Ovary (tissue), 10 donors: ENCODE measurements at regions of chr7 and their contacts with region 1.

Region 1: DNA sequence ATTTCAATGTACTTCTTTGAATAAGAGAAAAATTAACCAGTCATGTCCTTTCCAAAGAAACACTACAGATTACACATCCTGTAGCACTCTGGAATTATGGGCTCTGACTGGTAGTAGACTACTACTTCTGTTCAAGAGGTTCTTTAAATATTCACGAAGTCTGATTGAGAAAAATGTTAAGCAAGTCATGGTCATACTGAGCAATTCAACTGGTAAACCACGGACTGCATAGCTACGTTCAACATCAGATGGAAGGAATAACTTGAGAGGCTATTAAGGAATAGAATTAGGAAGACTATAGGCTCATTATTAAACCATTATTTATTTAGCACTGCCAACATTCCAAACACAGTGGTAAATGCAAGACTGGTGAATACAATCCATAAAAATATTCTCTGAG is 160.8 kb downstream of the IMMP2L start:
- DNase-seq: no peak
- H3K4me3 ChIP-seq: no peak overlapping the region
- H3K27ac ChIP-seq: no peak overlapping the region
- H3K4me1 ChIP-seq: peaks cover 3% of the 10 kb centered on the region
- H3K27me3 ChIP-seq: no peaks in the 10 kb centered on the region
- CTCF ChIP-seq: no peak
- EP300 ChIP-seq: no peak
- POLR2A ChIP-seq: no peak

Region 2: DNA sequence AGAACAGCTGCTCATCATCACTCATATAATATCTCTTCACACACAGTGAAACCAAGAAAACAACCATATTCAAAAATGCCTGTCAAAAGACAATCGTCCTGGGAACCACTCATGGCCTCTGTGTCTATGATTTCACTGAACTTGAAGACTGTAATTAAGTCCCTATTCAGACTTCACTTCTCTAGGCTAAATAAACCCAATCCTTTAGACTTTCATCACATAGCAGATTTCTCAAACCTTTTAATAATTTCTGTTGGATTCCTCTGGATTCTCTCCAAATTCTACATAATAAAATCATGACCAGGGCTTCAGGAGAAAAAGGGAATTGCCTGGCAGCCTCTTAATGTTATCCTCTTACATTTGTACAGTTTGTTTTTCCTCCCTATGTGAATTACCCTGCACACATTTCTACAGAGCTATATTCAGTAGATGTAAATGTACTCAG is 109.5 kb before region 1 on chr7:
- intact Hi-C with region 1: no loop called
- DNase-seq: no peak
- H3K4me3 ChIP-seq: no peak overlapping the region
- H3K27ac ChIP-seq: no peak overlapping the region
- H3K4me1 ChIP-seq: peaks cover 2% of the 10 kb centered on the region
- H3K27me3 ChIP-seq: no peaks in the 10 kb centered on the region
- CTCF ChIP-seq: no peak
- EP300 ChIP-seq: no peak
- POLR2A ChIP-seq: no peak

Region 3: GRCh38 chr7:111914261-111914660 is 512.7 kb after region 1 on chr7:
- intact Hi-C with region 1: no loop called
- DNase-seq: no peak
- H3K4me3 ChIP-seq: no peak overlapping the region
- H3K27ac ChIP-seq: no peak overlapping the region
- H3K4me1 ChIP-seq: no peaks in the 10 kb centered on the region
- H3K27me3 ChIP-seq: no peaks in the 10 kb centered on the region
- CTCF ChIP-seq: no peak
- EP300 ChIP-seq: no peak
- POLR2A ChIP-seq: no peak

Region 4: GRCh38 chr7:112701451-112701850 is 1299.9 kb after region 1 on chr7:
- intact Hi-C with region 1: loop called in 1 of 4 experiments (anchors 5 kb)
- DNase-seq: no peak
- H3K4me3 ChIP-seq: no peak overlapping the region
- H3K27ac ChIP-seq: no peak overlapping the region
- H3K4me1 ChIP-seq: no peaks in the 10 kb centered on the region
- H3K27me3 ChIP-seq: peaks cover 2% of the 10 kb centered on the region
- CTCF ChIP-seq: no peak
- EP300 ChIP-seq: no peak
- POLR2A ChIP-seq: no peak